WTC11 (cell line): ENCODE measurements at regions of chr19 and their contacts with region 1.

Region 1: DNA sequence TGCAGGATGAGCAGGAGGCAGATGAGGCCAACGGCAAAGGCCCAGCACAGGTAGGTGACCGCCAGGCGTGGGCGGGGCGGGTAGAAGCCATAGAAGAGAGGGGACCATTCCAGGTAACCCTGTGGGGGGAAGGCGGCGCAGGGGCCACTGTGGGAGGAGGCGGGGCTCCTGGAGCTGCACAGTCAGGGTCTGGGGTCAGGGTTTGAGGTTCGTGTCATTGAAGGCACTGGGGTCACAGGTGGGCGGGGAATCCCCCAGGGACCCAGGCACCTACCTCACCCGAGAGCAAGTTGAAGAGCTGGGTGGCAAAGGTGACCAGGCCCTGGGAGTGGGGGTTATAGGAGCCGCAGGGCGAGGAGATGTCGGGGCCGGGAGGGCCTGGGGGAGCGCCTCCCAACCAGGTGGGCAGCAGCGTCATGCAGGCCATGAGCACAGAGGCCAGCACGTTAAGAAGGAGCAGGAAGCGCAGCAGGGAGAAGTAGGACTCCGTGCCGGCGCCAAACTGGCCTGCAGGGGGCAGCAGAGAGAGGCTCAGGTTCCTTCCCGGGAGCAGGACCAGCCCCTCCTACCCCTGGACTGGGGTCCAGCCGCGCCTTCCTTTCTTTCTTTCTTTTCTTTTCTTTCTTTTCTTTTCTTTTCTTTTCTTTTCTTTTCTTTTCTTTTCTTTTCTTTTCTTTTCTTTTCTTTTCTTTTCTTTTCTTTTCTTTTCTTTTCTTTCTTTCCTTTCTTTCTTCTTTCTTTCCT is 4.6 kb downstream of the TMC4 start:
- DNase-seq: peak; percentile 99
- ATAC-seq: peak; percentile 46
- H3K4me3 Mint-ChIP-seq: no peak overlapping the region
- H3K27ac Mint-ChIP-seq: no peak overlapping the region
- H3K4me1 Mint-ChIP-seq: peaks cover 20% of the 10 kb centered on the region
- H3K27me3 Mint-ChIP-seq: peaks cover 32% of the 10 kb centered on the region
- CTCF ChIP-seq: peak; percentile 82

Region 2: GRCh38 chr19:54179921-54180461 is 11.6 kb after region 1 on chr19:
- CTCF ChIA-PET with region 1: interaction called, 14 read pairs
- POLR2A ChIA-PET with region 1: interaction called, 3 read pairs
- DNase-seq: peak; percentile 94
- ATAC-seq: peak; percentile 95
- H3K4me3 Mint-ChIP-seq: no peak overlapping the region
- H3K27ac Mint-ChIP-seq: peak overlapping the region; percentile 63
- H3K4me1 Mint-ChIP-seq: peaks cover 14% of the 10 kb centered on the region
- H3K27me3 Mint-ChIP-seq: no peaks in the 10 kb centered on the region
- CTCF ChIP-seq: no peak

Region 3: DNA sequence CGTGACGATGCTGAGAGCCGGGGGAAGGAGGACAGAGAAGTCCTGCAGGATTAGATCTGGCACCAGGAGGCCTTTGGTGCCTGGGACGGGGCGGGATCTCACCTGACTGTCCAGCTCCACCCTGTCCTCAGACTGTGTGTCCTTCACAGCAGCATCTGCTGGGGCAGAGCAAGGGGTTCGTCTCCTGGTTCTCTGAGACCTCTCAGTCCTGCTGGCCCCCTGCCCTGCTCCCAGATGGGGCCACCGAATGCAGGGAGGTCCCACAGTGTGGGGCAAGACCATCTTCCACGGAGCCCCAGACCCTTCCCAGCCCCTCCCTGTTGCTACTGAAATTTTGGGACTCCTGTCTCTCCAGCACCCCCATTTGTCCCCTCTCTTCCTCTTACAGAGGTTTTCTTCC is 49.9 kb after region 1 on chr19:
- CTCF ChIA-PET with region 1: no interaction called
- POLR2A ChIA-PET with region 1: no interaction called
- DNase-seq: no peak
- ATAC-seq: no peak
- H3K4me3 Mint-ChIP-seq: no peak overlapping the region
- H3K27ac Mint-ChIP-seq: no peak overlapping the region
- H3K4me1 Mint-ChIP-seq: peaks cover 13% of the 10 kb centered on the region
- H3K27me3 Mint-ChIP-seq: no peaks in the 10 kb centered on the region
- CTCF ChIP-seq: no peak